Posterior vena cava (tissue), 2 donors: ENCODE measurements at regions of chr15 and their contacts with region 1.

Region 1: DNA sequence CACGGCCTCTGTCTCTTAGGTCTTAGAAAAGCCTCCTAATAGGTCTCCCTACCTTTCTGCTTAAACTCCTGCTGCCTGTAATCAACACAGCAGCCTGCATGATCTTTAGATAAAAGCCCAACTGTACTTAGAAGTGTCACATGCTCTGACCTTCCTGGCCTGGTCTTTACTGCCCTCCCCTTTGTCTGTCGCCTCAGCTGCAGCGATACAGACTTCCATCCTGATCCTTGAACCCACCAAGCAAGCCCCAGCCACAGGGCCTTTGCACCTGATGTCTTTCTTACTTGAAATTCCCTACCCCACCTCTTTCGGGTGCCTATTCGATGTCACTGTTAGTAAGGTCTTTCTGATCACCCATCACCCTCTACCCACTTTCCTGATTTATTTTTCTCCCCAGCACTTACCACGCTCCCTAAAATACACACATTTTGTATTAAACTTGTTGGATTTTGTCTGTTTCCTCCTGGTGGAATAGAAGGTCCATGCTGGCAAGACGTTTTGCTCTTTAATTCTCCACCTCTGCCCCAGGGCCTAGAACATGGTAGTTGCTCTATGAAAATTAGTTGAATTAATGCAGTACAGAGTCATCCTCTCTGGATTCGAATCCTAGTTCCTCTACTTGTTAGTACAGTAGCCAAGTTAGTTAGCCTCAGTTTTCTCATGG is 51.1 kb downstream of the AQP9 start:
- DNase-seq: no peak

Region 2: DNA sequence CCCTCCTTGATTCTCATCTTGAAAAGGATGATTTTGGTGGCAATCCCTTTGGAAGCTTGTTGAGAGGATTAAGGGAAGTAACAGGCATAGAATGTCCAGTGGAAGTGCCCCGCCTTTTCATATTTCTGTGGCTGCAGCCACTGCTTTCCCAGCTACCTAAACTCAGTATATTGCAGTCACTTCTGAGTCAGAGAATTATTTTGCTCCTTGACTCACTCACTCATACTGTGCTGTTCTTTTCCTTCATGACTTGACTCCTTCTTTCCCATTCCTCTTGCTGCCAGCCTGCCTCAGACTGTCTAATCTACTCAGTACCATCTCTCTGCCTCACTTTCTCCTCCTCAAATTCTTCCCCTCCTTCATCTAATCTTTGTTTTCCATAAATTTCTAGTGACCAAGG is 509.3 kb before region 1 on chr15:
- intact Hi-C with region 1: no loop called
- DNase-seq: no peak

Region 3: GRCh38 chr15:58136731-58137130 is 52.5 kb before region 1 on chr15:
- intact Hi-C with region 1: loop called in 1 of 2 experiments (anchors 2 kb)
- DNase-seq: no peak

Region 4: GRCh38 chr15:59384507-59384906 is 1195.2 kb after region 1 on chr15:
- intact Hi-C with region 1: no loop called
- DNase-seq: no peak